ENCODE measurements at regions of chr6 and their contacts with region 1.

Region 1: DNA sequence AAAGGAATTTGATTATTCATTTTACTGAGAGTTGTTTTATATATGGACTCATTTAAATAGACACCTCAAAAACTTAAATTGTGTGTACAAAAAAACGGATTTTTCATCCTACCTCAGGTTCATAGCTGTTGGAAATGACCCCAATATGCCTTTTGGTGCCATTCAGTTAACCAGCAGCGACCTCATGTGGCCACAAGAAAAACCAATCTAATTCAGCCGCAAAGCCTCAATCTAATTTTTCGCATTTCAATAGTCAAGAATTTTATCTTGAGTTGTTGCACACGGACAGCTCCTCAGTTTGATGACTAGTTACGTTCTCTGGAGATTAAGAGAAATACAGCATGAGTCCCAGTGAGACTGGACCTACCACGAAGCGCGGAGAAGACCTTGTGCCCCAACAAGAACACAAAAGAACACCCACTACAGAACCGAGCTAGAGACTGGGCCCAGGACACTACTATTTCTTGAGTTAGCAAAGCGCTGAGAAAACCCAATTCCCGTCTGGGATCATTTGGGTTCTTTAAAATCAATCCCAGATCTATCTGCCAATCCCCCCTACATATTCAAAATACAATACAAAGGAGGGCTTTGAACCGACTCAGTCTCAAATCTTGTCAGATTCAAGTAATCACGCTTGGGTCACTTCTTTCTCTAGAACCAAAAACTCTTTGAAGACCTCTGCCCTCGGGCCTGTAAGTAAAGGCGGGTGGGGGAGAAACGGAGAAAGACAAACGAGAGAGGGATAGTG is 1.1 kb downstream of the TCP11 start:
- DNase-seq: peak; percentile 34 to 63 (median 42)
- H3K4me3 ChIP-seq: no peak overlapping the region
- H3K27ac ChIP-seq: no peak overlapping the region
- H3K4me1 ChIP-seq: peaks cover 0 to 20% of the 10 kb centered on the region in 2 donors
- H3K27me3 ChIP-seq: no peaks in the 10 kb centered on the region
- CTCF ChIP-seq: peak; percentile 66 to 94 (median 86)
- POLR2A ChIP-seq: no peak

Region 2: DNA sequence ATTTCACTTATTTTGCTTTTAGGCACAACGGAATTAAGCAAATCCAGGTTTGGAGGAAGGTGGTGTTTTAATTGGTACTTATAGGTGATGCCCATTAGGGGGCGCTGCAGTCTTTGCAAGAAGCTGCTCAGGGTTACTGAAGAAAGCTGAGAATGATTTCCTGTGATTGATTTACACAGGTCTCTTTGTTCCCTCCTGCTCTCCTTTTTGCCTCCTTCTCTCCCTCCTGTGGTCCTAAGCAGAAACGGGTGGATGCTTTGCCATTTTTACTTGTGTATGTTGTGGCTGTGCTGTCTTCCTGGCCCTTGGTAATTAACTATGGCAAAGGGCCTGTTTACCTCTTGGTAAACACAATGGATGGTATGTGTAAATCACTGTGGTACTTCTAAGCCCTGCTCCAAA is 153.2 kb before region 1 on chr6:
- intact Hi-C with region 1: loop called (anchors 2 to 5 kb)
- DNase-seq: peak; percentile 64 to 87 (median 79)
- H3K4me3 ChIP-seq: no peak overlapping the region
- H3K27ac ChIP-seq: peak overlapping the region in 1 of 5 donors; percentile 32
- H3K4me1 ChIP-seq: peaks cover 5 to 10% of the 10 kb centered on the region in 2 donors
- H3K27me3 ChIP-seq: no peaks in the 10 kb centered on the region
- CTCF ChIP-seq: peak; percentile 80 to 92 (median 89)
- POLR2A ChIP-seq: no peak

Region 3: GRCh38 chr6:35064757-35065440 is 75.2 kb before region 1 on chr6:
- intact Hi-C with region 1: loop called in 1 of 2 experiments (anchors 10 kb)
- DNase-seq: no peak
- H3K4me3 ChIP-seq: no peak overlapping the region
- H3K27ac ChIP-seq: no peak overlapping the region
- H3K4me1 ChIP-seq: peaks cover 10 to 15% of the 10 kb centered on the region in 2 donors
- H3K27me3 ChIP-seq: no peaks in the 10 kb centered on the region
- CTCF ChIP-seq: no peak
- POLR2A ChIP-seq: no peak

Region 4: GRCh38 chr6:35202066-35202546 is 62.0 kb after region 1 on chr6:
- intact Hi-C with region 1: loop called (anchors 5 to 10 kb)
- DNase-seq: no peak
- H3K4me3 ChIP-seq: no peak overlapping the region
- H3K27ac ChIP-seq: no peak overlapping the region
- H3K4me1 ChIP-seq: no peaks in the 10 kb centered on the region
- H3K27me3 ChIP-seq: no peaks in the 10 kb centered on the region
- CTCF ChIP-seq: no peak
- POLR2A ChIP-seq: no peak

Region 5: DNA sequence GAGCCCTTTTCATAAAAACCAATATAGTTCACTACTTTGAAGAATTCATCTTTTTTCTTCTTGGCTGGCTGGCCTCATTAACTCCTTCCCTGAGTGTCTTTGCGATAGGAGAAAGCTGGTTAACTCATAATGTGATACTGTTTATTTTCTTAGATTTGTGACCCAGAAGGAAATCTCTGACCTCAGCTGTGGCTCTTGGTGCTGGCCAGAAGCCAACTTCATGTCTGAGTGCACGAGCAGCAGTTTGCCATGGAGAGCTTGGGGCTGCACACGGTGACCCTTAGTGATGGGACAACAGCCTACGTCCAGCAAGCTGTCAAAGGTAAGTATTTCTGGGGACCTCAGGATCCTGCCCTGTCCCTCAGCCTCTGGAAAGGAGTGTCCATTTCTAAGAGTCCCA is 140.8 kb after region 1 on chr6:
- intact Hi-C with region 1: no loop called
- DNase-seq: peak in 1 of 7 donors; percentile 38
- H3K4me3 ChIP-seq: no peak overlapping the region
- H3K27ac ChIP-seq: no peak overlapping the region
- H3K4me1 ChIP-seq: no peaks in the 10 kb centered on the region
- H3K27me3 ChIP-seq: no peaks in the 10 kb centered on the region
- CTCF ChIP-seq: no peak
- POLR2A ChIP-seq: no peak